Natural killer cell (primary cell): ENCODE measurements at regions of chr2 and their contacts with region 1.

Region 1: DNA sequence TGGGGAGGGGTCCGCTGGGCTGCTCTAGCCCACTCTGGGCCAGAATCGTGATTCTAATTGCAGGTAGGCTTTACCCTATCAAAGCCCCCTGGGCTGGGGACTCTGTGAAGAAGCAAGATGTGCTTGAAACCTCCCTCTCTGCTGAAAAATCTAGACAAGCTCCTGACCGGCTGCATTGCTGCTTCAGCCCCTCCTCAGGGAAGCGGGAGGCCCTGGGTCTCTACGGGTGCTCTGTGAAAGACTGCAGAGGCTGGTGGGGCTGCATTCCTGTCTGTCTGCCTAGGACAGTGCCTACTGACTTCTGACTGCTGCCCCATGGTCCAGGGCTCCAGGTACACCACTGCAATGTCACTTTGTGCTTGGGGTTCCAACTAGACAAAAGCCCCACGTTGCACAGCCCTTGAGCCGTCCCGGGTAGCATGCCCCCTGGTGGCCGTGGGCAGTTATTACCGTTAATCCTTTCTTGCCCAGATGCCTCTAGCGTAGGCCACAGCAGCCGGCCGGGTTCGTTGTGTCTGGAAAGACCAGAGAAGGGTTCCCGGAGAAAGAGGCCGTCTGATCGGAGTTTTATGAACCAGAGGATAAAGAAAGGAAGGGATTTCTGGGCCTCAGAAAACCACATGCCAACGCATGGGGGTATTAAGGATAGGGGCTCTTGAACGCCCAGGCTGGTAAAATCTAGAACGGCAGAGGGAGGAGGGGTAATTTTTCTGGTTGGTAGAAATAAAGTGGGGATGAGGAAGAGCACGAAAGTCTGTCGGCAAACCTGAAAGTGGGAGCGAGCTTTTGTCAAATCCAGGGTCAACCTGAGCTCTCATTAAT is 15.9 kb upstream of the C1QL2 start:
- DNase-seq: peak; percentile 43 to 70
- ATAC-seq: peak; percentile 53 to 78 (median 56)
- H3K4me3 ChIP-seq: no peak overlapping the region
- H3K4me3 Mint-ChIP-seq: no peak overlapping the region
- H3K27ac ChIP-seq: no peak overlapping the region
- H3K27ac Mint-ChIP-seq: no peak overlapping the region
- H3K4me1 ChIP-seq: no peaks in the 10 kb centered on the region
- H3K4me1 Mint-ChIP-seq: no peaks in the 10 kb centered on the region
- H3K27me3 ChIP-seq: no peaks in the 10 kb centered on the region
- H3K27me3 Mint-ChIP-seq: no peaks in the 10 kb centered on the region
- CTCF ChIP-seq: peak; percentile 82

Region 2: GRCh38 chr2:118046634-118047210 is 1127.7 kb before region 1 on chr2:
- intact Hi-C with region 1: loop called (anchors 10 kb)
- DNase-seq: peak in 1 of 2 donors; percentile 59
- ATAC-seq: peak in 1 of 3 donors; percentile 44
- H3K4me3 ChIP-seq: no peak overlapping the region
- H3K4me3 Mint-ChIP-seq: no peak overlapping the region
- H3K27ac ChIP-seq: no peak overlapping the region
- H3K27ac Mint-ChIP-seq: no peak overlapping the region
- H3K4me1 ChIP-seq: peaks cover 3% of the 10 kb centered on the region
- H3K4me1 Mint-ChIP-seq: peaks cover 0 to 5% of the 10 kb centered on the region in 2 donors
- H3K27me3 ChIP-seq: peaks cover 17% of the 10 kb centered on the region
- H3K27me3 Mint-ChIP-seq: peaks cover 36 to 59% of the 10 kb centered on the region in 2 donors
- CTCF ChIP-seq: peak; percentile 58